ENCODE measurements at regions of chr3 and their contacts with region 1.

Region 1: DNA sequence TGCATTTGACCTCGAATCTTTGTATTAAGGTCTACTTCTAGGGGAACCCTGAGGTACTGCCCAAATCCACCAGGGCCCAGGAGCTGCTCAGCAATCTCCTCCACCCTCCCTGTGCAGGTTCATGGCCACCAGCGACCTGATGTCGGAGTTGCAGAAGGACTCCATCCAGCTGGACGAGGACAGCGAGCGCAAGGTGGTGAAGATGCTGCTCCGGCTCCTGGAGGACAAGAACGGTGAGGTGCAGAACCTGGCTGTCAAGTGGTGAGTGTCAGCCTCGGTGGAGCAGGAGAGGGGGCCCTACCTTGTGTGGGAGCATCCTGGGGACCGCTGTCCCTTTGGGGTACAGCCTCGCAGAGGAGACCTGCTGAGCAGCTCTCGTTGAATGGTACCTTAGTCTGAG is 6.9 kb downstream of the CAND2 start:
- DNase-seq: no peak
- H3K4me3 ChIP-seq: no peak overlapping the region
- H3K27ac ChIP-seq: no peak overlapping the region
- H3K4me1 ChIP-seq: no peaks in the 10 kb centered on the region
- H3K27me3 ChIP-seq: no peaks in the 10 kb centered on the region
- CTCF ChIP-seq: no peak

Region 2: GRCh38 chr3:11250902-11251813 is 1552.2 kb before region 1 on chr3:
- CTCF ChIA-PET with region 1: no interaction called
- POLR2A ChIA-PET with region 1: interaction called, 15 read pairs
- intact Hi-C with region 1: no loop called
- DNase-seq: no peak
- H3K4me3 ChIP-seq: no peak overlapping the region
- H3K27ac ChIP-seq: 0 out of 2 replicates have a peak overlapping the region, but pooled peaks have one; percentile 24
- H3K4me1 ChIP-seq: peaks cover 20% of the 10 kb centered on the region
- H3K27me3 ChIP-seq: no peaks in the 10 kb centered on the region
- CTCF ChIP-seq: no peak

Region 3: DNA sequence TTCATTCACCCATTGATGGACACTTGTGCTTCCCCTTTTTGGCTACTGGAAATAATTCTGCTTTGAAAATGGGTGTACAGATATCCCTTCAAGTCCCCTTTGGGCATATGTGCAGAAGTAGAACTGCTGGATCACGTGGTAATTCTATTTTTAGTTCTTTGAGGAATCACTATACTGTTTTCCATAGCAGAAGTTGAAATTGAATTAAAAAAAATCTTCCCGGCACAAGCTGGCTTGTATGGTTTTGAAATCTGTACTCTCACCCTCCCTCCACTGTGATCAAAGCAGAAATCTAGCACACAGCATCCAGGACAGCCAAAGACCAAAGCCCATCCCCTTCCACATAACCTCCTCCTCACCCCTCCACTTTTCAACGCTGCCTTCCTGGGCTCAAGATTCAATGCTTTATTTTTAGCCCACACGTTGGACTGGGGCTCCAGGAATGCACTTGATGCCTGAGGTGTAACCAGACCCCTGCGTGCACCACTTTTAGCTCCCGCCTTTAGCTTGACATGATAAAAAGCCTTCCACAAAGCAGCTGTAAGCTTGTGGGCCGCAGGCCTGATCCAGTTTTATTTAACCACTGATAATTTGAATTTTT is 74.2 kb before region 1 on chr3:
- CTCF ChIA-PET with region 1: no interaction called
- POLR2A ChIA-PET with region 1: no interaction called
- intact Hi-C with region 1: no loop called
- DNase-seq: no peak
- H3K4me3 ChIP-seq: no peak overlapping the region
- H3K27ac ChIP-seq: no peak overlapping the region
- H3K4me1 ChIP-seq: peaks cover 8% of the 10 kb centered on the region; the same call in 1 of the 2 replicates
- H3K27me3 ChIP-seq: no peaks in the 10 kb centered on the region
- CTCF ChIP-seq: no peak